ENCODE measurements at regions of chr11 and their contacts with region 1.

Region 1: DNA sequence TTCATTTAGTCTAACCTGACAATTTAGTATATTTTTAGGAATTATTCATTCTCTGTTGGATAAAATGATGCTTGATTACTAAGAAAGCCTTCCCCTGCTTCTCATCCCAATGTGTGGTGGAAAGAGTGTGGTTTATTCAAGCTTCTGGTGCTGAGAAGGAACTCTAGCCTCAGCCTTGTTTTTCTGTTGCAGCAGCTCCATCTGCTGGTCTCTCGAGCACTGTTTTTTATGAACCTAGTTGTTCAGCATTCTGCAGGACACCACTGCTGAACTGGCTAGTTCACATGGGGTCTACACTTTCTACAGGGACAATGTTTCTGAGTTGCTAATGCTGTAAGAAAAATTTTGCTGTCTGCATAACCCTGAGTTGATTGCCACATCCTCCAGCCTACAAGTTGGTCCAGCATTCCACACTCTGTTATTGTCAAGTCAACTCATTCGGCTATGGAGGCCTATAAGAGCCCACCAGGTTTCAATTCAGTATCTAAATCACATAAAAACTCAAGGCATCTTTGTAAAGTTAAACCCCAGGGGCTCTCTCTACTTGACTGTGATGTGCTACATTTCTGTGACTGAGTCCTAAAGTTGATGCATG is 14.3 kb downstream of the OR2AG2 start:
- DNase-seq: peak; percentile 34
- CTCF ChIP-seq: peak; percentile 69

Region 2: GRCh38 chr11:6389921-6390724 is 367.3 kb before region 1 on chr11 and contains the start of gene SMPD1:
- CTCF ChIA-PET with region 1: no interaction called
- POLR2A ChIA-PET with region 1: no interaction called
- DNase-seq: peak; percentile 97
- CTCF ChIP-seq: no peak

Region 3: DNA sequence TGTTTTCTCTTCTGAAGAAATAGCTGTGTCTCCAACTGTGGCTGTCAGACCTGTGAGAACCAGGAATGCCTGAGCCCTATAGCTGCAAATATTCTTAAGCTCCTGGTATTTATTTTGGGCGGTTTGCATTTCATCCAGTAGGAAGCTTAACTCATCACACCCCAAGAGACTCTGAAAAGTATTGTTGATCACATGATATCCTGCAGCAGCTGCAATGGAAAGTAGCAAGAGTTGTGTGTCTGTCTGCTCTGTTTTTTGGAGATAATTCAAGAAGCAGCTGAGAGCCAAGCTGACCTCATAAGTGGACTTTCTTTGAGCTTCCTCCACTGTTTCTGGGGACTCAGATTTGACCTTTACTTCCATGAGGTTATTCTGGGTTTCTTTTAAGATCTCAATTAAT is 37.9 kb before region 1 on chr11:
- CTCF ChIA-PET with region 1: interaction called, 59 read pairs
- POLR2A ChIA-PET with region 1: no interaction called
- DNase-seq: no peak
- CTCF ChIP-seq: no peak

Region 4: GRCh38 chr11:6737872-6738466 is 19.5 kb before region 1 on chr11:
- CTCF ChIA-PET with region 1: interaction called, 259 read pairs
- POLR2A ChIA-PET with region 1: no interaction called
- DNase-seq: peak; percentile 58
- CTCF ChIP-seq: peak; percentile 66

Region 5: GRCh38 chr11:6771926-6772893 is 14.7 kb after region 1 on chr11 and contains the start of gene OR2AG2:
- CTCF ChIA-PET with region 1: interaction called, 51 read pairs
- POLR2A ChIA-PET with region 1: no interaction called
- DNase-seq: peak; percentile 49
- CTCF ChIP-seq: no peak

Region 6: GRCh38 chr11:6833356-6833755 is 75.9 kb after region 1 on chr11:
- CTCF ChIA-PET with region 1: interaction called, 12 read pairs
- POLR2A ChIA-PET with region 1: no interaction called
- DNase-seq: no peak
- CTCF ChIP-seq: no peak

Region 7: DNA sequence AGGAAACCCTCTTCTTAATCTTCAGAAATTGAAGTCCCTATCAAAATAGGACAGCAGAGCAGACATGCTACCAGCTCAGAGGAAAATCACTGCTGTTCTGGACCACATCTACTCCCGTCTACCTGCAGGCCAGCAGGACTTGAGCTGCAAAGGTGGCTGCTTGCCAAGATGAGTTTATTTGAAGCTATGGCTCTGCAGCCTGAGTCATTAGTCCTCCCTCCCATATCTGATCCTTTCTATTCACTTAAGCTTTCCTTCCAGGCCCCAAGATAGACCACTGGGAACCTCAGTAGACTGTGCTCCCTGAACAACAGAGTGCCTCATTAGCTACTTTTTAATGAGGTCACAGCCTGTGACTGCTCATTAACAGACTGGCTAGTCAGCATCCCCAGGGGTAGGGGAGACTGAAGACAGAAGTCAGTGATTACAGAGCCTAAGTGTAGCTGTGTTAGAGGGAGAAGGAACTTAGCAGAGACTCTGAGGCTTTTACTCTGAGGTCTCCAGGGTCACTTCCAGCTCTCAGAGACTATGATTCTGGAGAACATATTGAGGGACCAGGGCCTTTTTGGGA is 98.6 kb after region 1 on chr11:
- CTCF ChIA-PET with region 1: no interaction called
- POLR2A ChIA-PET with region 1: no interaction called
- DNase-seq: no peak
- CTCF ChIP-seq: no peak